Psoas muscle (tissue), 8 donors: ENCODE measurements at regions of chr7 and their contacts with region 1.

Region 1: DNA sequence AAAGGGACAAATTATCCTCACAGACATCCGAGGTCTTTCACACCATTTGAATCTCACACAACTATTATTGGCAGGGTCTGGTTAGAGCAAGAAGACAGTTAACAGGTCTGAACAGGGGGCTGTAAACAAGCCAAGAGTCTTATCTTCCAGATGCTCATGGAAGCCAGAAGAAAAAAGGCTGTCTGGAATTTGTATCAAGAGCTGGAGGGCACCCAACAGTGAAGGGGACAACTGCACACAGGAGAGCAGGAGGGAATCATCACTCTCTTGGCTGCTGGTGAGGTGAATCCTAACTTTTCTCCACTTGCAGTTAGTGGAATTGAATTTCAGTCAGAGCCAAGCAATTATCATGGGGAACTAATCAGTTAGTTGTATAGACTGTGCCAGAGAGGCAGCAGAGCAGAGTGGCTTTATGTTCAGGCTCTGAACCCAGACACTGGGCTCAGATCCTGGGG is 880.2 kb upstream of the AUTS2 start:
- DNase-seq: no peak
- ATAC-seq: no peak
- H3K4me3 ChIP-seq: no peak overlapping the region
- H3K27ac ChIP-seq: no peak overlapping the region
- H3K4me1 ChIP-seq: no peaks in the 10 kb centered on the region
- H3K27me3 ChIP-seq: no peaks in the 10 kb centered on the region
- CTCF ChIP-seq: no peak

Region 2: GRCh38 chr7:68185631-68186456 is 532.3 kb before region 1 on chr7:
- intact Hi-C with region 1: loop called in 1 of 2 experiments (anchors 10 kb)
- DNase-seq: no peak
- ATAC-seq: no peak
- H3K4me3 ChIP-seq: no peak overlapping the region
- H3K27ac ChIP-seq: no peak overlapping the region
- H3K4me1 ChIP-seq: no peaks in the 10 kb centered on the region
- H3K27me3 ChIP-seq: no peaks in the 10 kb centered on the region
- CTCF ChIP-seq: no peak